PC-3 (cell line): ENCODE measurements at regions of chr13 and their contacts with region 1.

Region 1: DNA sequence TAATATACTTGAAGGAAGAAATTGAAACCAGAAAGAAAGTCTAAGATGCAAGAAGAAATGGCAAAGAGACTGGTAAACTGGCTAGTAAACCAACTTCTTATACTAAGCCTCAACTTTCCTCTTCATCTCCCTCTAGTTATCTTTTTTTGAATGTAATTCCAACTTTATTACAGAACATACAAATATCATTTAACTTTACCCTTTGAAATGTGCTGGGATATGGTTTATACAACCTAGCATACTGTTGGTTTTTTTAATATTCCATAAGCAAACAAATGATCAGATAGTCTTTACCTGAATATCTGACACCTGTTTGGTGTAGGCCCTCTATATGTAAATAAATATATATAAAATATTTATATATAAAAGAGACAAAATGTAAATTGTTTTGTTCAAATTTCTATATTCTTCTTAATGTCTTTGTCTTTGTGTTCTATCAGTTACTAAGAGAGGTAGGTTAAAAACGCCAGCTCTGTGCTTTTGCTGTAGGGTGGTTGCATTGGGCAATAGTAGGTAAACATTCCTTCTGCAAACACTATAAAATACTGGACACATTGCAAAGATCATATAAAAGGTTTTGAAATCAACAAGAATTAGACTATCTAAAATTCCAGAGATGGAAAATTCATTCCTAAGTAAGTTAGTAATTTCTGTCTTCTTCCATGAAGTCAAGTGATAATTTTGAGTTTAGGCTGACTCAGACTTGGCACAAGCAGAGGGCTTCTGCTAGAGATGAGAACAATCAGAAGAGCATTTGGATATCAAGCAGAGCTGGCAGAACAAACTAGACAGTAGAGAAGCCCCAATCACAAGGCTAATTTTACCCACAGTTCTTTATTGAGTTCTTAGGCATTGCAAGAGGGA is 383.3 kb downstream of the RFC3 start:
- DNase-seq: peak; percentile 83
- ATAC-seq: peak; percentile 91
- H3K4me3 ChIP-seq: no peak overlapping the region
- H3K27ac ChIP-seq: peak overlapping the region; percentile 88
- H3K4me1 ChIP-seq: peaks cover 35% of the 10 kb centered on the region
- H3K27me3 ChIP-seq: no peaks in the 10 kb centered on the region
- CTCF ChIP-seq: no peak

Region 2: GRCh38 chr13:34124666-34125305 is 76.5 kb before region 1 on chr13:
- CTCF ChIA-PET with region 1: no interaction called
- POLR2A ChIA-PET with region 1: no interaction called
- intact Hi-C with region 1: loop called (anchors 2 kb)
- DNase-seq: peak; percentile 87
- ATAC-seq: peak; percentile 84
- H3K4me3 ChIP-seq: no peak overlapping the region
- H3K27ac ChIP-seq: peak overlapping the region; percentile 85
- H3K4me1 ChIP-seq: peaks cover 45% of the 10 kb centered on the region
- H3K27me3 ChIP-seq: no peaks in the 10 kb centered on the region
- CTCF ChIP-seq: no peak

Region 3: GRCh38 chr13:34265016-34265692 is 63.9 kb after region 1 on chr13:
- CTCF ChIA-PET with region 1: no interaction called
- POLR2A ChIA-PET with region 1: no interaction called
- intact Hi-C with region 1: loop called (anchors 2 kb)
- DNase-seq: peak; percentile 78
- ATAC-seq: peak; percentile 87
- H3K4me3 ChIP-seq: no peak overlapping the region; the same call in 1 of the 2 replicates
- H3K27ac ChIP-seq: peak overlapping the region; percentile 93
- H3K4me1 ChIP-seq: peaks cover 19% of the 10 kb centered on the region
- H3K27me3 ChIP-seq: no peaks in the 10 kb centered on the region
- CTCF ChIP-seq: no peak